PC-3 (cell line): ENCODE measurements at regions of chr7 and their contacts with region 1.

Region 1: DNA sequence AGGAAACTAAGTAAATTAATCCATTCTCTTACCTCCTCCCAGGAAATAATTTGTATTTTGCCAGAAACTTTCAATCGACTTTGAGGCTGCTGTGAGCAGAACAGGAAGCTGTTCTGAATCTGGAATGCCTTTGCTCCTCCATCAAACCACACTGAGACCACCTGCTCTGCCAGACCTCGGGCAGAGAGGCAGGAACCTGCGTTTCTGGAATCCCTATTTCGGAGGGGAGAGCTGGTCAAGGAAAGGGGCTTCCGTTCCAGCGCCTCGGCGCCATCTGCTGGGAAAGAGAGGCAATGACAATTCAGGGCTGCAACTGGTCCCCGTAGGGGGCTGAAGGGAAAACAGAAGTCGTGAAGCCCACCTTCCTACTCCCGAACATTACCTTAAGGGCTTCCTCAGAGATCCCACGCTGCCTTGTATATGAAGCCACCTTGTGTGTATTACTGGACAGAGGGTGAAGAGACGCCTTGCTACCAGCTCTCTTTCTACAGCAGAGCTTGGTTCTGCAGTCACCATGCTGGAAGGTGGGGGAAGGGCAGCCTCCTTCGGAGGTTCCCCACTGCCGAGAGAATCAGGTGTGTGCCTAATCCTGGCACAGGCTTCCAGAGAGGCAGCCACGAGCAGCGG is 31.2 kb downstream of the ZNF467 start:
- DNase-seq: peak; percentile 76
- ATAC-seq: peak; percentile 85
- H3K4me3 ChIP-seq: peak overlapping the region; percentile 66
- H3K27ac ChIP-seq: no peak overlapping the region
- H3K4me1 ChIP-seq: no peaks in the 10 kb centered on the region
- H3K27me3 ChIP-seq: peaks cover 7% of the 10 kb centered on the region; the same call in 1 of the 2 replicates
- CTCF ChIP-seq: peak; percentile 92

Region 2: GRCh38 chr7:149624419-149625339 is 117.5 kb before region 1 on chr7:
- CTCF ChIA-PET with region 1: interaction called, 6 read pairs
- POLR2A ChIA-PET with region 1: no interaction called
- intact Hi-C with region 1: loop called (anchors 1 kb)
- DNase-seq: peak; percentile 88
- ATAC-seq: peak; percentile 94
- H3K4me3 ChIP-seq: peak overlapping the region; percentile 99
- H3K27ac ChIP-seq: no peak overlapping the region
- H3K4me1 ChIP-seq: peaks cover 17% of the 10 kb centered on the region
- H3K27me3 ChIP-seq: peaks cover 8% of the 10 kb centered on the region
- CTCF ChIP-seq: peak; percentile 74

Region 3: GRCh38 chr7:149662591-149663095 is 79.5 kb before region 1 on chr7:
- CTCF ChIA-PET with region 1: interaction called, 22 read pairs
- POLR2A ChIA-PET with region 1: no interaction called
- intact Hi-C with region 1: no loop called
- DNase-seq: peak; percentile 77
- ATAC-seq: peak; percentile 96
- H3K4me3 ChIP-seq: no peak overlapping the region
- H3K27ac ChIP-seq: no peak overlapping the region
- H3K4me1 ChIP-seq: 0 out of 2 replicates have a peak, but pooled peaks cover 4% of the 10 kb centered on the region
- H3K27me3 ChIP-seq: no peaks in the 10 kb centered on the region
- CTCF ChIP-seq: peak; percentile 75

Region 4: GRCh38 chr7:149669121-149669818 is 72.9 kb before region 1 on chr7:
- CTCF ChIA-PET with region 1: interaction called, 3 read pairs
- POLR2A ChIA-PET with region 1: no interaction called
- intact Hi-C with region 1: loop called (anchors 1 kb)
- DNase-seq: peak; percentile 43
- ATAC-seq: peak; percentile 51
- H3K4me3 ChIP-seq: no peak overlapping the region
- H3K27ac ChIP-seq: no peak overlapping the region
- H3K4me1 ChIP-seq: 0 out of 2 replicates have a peak, but pooled peaks cover 4% of the 10 kb centered on the region
- H3K27me3 ChIP-seq: no peaks in the 10 kb centered on the region
- CTCF ChIP-seq: peak; percentile 65

Region 5: DNA sequence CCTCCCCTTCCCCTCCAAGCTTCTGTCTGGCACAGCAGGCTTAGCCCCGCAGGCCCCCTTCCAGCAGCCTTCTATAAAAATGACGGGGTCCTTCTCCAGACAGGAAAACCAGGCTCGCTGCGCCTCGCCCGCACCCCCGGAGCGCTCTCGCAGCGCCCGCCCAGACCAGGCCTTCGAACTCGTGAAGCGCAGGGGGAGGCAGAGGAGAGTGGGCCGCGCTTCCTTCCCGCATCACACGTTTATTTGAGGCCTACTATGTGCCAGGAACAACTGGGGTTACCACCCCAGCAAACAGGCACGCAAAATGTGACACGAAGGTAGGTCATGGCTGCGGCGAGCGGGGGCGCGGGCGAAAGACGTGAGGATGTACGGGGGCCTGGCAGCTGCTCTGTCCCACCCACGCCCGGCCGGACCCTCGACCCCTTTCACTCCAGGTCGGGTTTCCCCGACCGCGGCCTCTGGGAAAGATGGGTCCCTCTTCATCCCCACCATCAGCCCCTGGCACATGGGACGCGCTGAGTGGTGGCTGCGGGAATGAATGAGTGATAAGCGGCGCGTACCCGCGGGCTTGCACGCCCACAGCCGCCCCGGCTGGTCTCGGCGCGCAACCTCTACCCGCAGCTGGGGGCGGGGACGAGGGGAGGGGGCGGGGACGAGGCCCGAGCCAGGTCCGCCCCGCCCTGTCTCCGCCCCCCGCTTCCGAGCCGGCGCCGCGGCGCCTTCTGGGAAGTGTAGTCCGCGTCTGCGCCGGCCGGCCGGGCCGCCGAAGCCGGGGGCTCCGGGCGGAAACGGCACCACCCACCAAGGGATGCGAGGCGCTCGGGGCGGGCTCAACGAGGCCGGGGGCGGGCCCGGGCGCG is 27.9 kb before region 1 on chr7:
- CTCF ChIA-PET with region 1: no interaction called
- POLR2A ChIA-PET with region 1: no interaction called
- intact Hi-C with region 1: loop called (anchors 2 kb)
- DNase-seq: peak; percentile 90
- ATAC-seq: peak; percentile 91
- H3K4me3 ChIP-seq: peak overlapping the region; percentile 85
- H3K27ac ChIP-seq: no peak overlapping the region
- H3K4me1 ChIP-seq: peaks cover 9% of the 10 kb centered on the region
- H3K27me3 ChIP-seq: no peaks in the 10 kb centered on the region
- CTCF ChIP-seq: no peak